ENCODE measurements at regions of chr12 and their contacts with region 1.

Region 1: GRCh38 chr12:121494093-121494787 is 86.6 kb downstream of the KDM2B start:
- DNase-seq: peak; percentile 31 to 76 (median 67)
- ATAC-seq: peak; percentile 67
- H3K4me3 ChIP-seq: no peak overlapping the region
- H3K4me3 Mint-ChIP-seq: no peak overlapping the region
- H3K27ac ChIP-seq: no peak overlapping the region
- H3K27ac Mint-ChIP-seq: peak overlapping the region; percentile 27
- H3K4me1 ChIP-seq: peaks cover 16% of the 10 kb centered on the region
- H3K4me1 Mint-ChIP-seq: peaks cover 21% of the 10 kb centered on the region
- H3K27me3 ChIP-seq: no peaks in the 10 kb centered on the region
- H3K27me3 Mint-ChIP-seq: no peaks in the 10 kb centered on the region
- CTCF ChIP-seq: peak; percentile 87

Region 2: DNA sequence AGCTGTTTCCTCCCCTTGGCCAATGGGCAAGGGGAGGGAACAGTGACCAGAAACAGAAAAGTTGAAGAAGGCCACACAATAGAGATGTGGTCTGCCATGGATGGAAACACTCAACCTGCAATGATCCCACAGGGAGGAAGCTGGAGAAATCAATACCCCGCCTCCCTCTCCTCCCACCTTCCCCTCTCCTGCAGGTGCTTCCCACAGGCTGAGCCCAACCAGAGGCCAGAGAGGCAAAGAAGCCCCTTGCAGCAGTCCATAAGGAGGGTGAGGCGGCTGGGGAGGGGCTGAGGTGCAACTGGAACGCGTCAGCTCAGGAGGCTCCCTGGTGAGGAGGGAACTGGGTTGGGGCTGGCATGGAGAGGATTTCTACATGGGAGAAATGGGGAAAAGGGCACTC is 10.3 kb before region 1 on chr12:
- CTCF ChIA-PET with region 1: interaction called, 12 read pairs
- POLR2A ChIA-PET with region 1: interaction called, 4 read pairs
- intact Hi-C with region 1: no loop called
- DNase-seq: no peak
- ATAC-seq: no peak
- H3K4me3 ChIP-seq: no peak overlapping the region
- H3K4me3 Mint-ChIP-seq: no peak overlapping the region
- H3K27ac ChIP-seq: no peak overlapping the region
- H3K27ac Mint-ChIP-seq: no peak overlapping the region
- H3K4me1 ChIP-seq: no peaks in the 10 kb centered on the region
- H3K4me1 Mint-ChIP-seq: peaks cover 8% of the 10 kb centered on the region
- H3K27me3 ChIP-seq: no peaks in the 10 kb centered on the region
- H3K27me3 Mint-ChIP-seq: no peaks in the 10 kb centered on the region
- CTCF ChIP-seq: no peak

Region 3: DNA sequence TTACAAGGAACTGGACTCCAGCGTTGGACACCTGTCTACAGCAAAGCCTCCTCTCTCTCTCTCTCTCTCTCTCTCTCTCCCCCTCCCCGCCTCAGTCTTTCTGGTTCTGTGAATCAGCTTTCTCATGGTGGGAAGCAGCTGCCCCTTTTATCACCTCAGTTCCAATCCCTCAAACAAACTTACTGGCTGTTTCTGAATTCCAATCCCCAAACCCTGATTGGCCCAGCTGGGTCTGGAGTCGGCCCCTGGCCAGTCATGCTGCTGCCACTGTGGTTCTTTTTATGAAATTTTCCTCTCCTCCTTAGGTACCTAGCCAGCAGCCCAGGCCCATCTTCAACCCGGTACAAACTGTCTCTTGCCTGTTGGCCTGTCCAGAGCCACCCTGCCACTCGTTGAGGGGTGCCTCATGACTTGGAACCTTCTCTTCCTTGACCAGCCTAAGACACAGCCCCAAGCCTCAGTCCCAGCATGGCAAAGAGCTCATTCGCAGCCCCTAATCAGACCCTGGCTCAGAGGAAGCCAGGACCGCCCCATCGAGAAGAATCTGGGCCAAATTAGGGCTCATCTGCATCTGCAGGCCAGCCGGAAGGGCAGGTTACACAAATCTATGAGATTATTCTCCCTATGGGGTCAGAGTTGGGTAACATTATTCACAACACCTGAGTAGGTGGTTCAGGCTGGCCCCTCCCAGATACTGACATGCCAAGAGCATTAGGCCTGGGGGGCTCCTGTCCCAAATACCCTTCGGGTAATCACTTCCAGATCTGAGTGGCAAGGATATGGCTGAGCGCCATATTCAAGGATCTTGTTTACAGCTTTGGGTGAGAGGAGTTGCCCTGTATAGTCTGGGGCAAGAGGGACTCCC is 184.7 kb after region 1 on chr12:
- CTCF ChIA-PET with region 1: interaction called, 14 read pairs
- POLR2A ChIA-PET with region 1: interaction called, 3 read pairs
- intact Hi-C with region 1: loop called (anchors 1 to 2 kb)
- DNase-seq: no peak
- ATAC-seq: no peak
- H3K4me3 ChIP-seq: no peak overlapping the region
- H3K4me3 Mint-ChIP-seq: no peak overlapping the region
- H3K27ac ChIP-seq: no peak overlapping the region
- H3K27ac Mint-ChIP-seq: peak overlapping the region; percentile 83
- H3K4me1 ChIP-seq: peaks cover 5% of the 10 kb centered on the region
- H3K4me1 Mint-ChIP-seq: peaks cover 12% of the 10 kb centered on the region
- H3K27me3 ChIP-seq: no peaks in the 10 kb centered on the region
- H3K27me3 Mint-ChIP-seq: no peaks in the 10 kb centered on the region
- CTCF ChIP-seq: no peak